ENCODE measurements at regions of chr19 and their contacts with region 1.

Region 1: GRCh38 chr19:1074544-1075283 is 7.7 kb downstream of the ARHGAP45 start:
- DNase-seq: peak; percentile 88 to 99 (median 95)
- ATAC-seq: peak; percentile 48 to 60 (median 55)
- H3K4me3 ChIP-seq: peak overlapping the region; percentile 37 to 49
- H3K4me3 Mint-ChIP-seq: peak overlapping the region; percentile 73 to 88 (median 77)
- H3K27ac ChIP-seq: peak overlapping the region; percentile 93
- H3K27ac Mint-ChIP-seq: peak overlapping the region; percentile 96 to 99
- H3K4me1 ChIP-seq: peaks cover 56 to 94% of the 10 kb centered on the region in 2 experiments
- H3K4me1 Mint-ChIP-seq: peaks cover 46 to 60% (median 53%) of the 10 kb centered on the region in 3 donors
- H3K27me3 ChIP-seq: no peaks in the 10 kb centered on the region
- H3K27me3 Mint-ChIP-seq: no peaks in the 10 kb centered on the region

Region 2: GRCh38 chr19:1020868-1021425 is 53.8 kb before region 1 on chr19 and contains the start of gene TMEM259:
- CTCF ChIA-PET with region 1: interaction called in 1 of 2 experiments, 5 read pairs
- POLR2A ChIA-PET with region 1: interaction called in 1 of 2 experiments, 24 read pairs
- DNase-seq: peak; percentile 94 to 98 (median 97)
- ATAC-seq: peak; percentile 81 to 94 (median 92)
- H3K4me3 ChIP-seq: peak within 1 kb of the TSS; percentile 80 to 93
- H3K4me3 Mint-ChIP-seq: peak within 1 kb of the TSS; percentile 89 to 90 (median 89)
- H3K27ac ChIP-seq: peak within 1 kb of the TSS; percentile 99
- H3K27ac Mint-ChIP-seq: peak within 1 kb of the TSS; percentile 97 to 99
- H3K4me1 ChIP-seq: peaks cover 10 to 71% of the 10 kb centered on the region in 2 experiments
- H3K4me1 Mint-ChIP-seq: peaks cover 34 to 51% (median 43%) of the 10 kb centered on the region in 3 donors
- H3K27me3 ChIP-seq: no peaks in the 10 kb centered on the region
- H3K27me3 Mint-ChIP-seq: peaks cover 0 to 2% of the 10 kb centered on the region in 2 donors
- total RNA-seq, gene TMEM259: 319 to 423 (median 372) TPM

Region 3: GRCh38 chr19:1189419-1189818 is 114.7 kb after region 1 on chr19:
- CTCF ChIA-PET with region 1: interaction called, 5 to 13 read pairs
- POLR2A ChIA-PET with region 1: no interaction called
- DNase-seq: peak in 8 of 35 experiments; percentile 20 to 60 (median 46)
- ATAC-seq: peak; percentile 34 to 82 (median 64)
- H3K4me3 ChIP-seq: no peak overlapping the region
- H3K4me3 Mint-ChIP-seq: peak overlapping the region in 1 of 3 donors; percentile 25
- H3K27ac ChIP-seq: peak overlapping the region; percentile 34
- H3K27ac Mint-ChIP-seq: peak overlapping the region; percentile 90 to 92
- H3K4me1 ChIP-seq: peaks cover 11 to 44% of the 10 kb centered on the region in 2 experiments
- H3K4me1 Mint-ChIP-seq: peaks cover 19 to 25% (median 25%) of the 10 kb centered on the region in 3 donors
- H3K27me3 ChIP-seq: no peaks in the 10 kb centered on the region
- H3K27me3 Mint-ChIP-seq: no peaks in the 10 kb centered on the region

Region 4: DNA sequence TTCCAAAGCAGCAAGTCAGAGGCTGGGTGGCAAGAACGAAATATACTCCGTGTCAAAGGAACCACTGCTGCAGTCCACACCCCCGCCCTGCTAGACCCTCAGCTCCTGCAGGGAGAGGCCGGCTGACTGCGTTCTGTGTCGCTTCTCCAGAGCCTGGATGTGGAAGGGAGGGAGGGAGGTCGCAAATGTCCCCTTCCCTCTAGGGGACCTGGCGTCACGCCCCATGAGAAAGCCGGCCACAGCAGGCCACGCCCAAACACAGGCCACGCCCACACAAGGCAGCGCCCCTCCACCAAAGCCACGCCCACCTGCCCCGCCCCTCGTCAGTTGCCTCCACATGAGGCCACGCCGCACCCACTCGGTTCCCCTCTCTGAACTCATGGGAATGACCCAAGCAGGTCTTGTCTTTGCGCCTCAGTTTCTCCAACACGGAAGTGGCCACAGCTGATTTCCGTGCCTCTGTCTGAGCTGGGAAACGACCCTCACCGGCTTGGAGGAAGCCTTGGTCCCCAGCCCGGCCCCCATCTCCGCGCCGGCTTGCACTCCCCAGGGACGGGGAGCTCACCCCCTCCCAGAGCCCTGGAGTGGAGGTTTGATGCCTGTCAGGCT is 616.1 kb after region 1 on chr19:
- CTCF ChIA-PET with region 1: no interaction called
- POLR2A ChIA-PET with region 1: no interaction called
- DNase-seq: peak in 29 of 35 experiments; percentile 19 to 67 (median 45)
- ATAC-seq: peak in 3 of 4 experiments; percentile 12 to 70 (median 37)
- H3K4me3 ChIP-seq: no peak overlapping the region
- H3K4me3 Mint-ChIP-seq: no peak overlapping the region
- H3K27ac ChIP-seq: no peak overlapping the region
- H3K27ac Mint-ChIP-seq: no peak overlapping the region
- H3K4me1 ChIP-seq: peaks cover 0 to 12% of the 10 kb centered on the region in 2 experiments
- H3K4me1 Mint-ChIP-seq: no peaks in the 10 kb centered on the region
- H3K27me3 ChIP-seq: peaks cover 8 to 67% of the 10 kb centered on the region in 2 experiments
- H3K27me3 Mint-ChIP-seq: peaks cover 14 to 52% of the 10 kb centered on the region in 2 donors

Region 5: DNA sequence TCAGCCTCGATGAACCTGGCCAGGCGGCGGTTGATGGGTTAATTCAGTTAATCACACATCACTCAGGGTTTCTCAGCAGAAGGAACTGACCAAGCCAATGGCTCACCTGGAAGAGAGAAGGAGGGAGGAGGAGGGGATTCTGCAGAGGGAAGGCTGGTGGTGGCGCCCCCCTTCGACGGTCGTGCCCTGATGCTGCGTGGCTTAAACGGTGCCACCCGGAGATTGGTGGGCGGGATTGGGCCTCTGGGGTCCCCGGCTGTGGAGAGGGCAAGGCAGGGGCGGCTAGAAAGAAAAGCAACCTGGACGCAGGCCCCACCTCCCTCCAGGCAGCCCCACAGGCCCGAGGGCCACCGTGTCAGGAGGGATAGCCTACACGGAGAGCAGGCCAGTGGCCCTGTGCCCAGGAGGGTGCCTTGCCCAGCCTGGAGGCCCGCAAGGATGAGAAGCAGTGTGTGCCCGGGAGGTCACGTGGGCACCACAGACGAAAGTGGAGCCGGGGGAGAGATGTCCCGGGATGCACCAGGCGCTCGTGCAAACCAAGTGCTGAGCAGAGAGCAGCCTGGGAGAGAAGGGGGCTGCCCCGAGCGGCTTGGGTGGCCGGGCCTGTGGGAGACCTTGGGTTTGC is 882.3 kb after region 1 on chr19:
- CTCF ChIA-PET with region 1: no interaction called
- POLR2A ChIA-PET with region 1: no interaction called
- DNase-seq: no peak
- ATAC-seq: no peak
- H3K4me3 ChIP-seq: no peak overlapping the region
- H3K4me3 Mint-ChIP-seq: no peak overlapping the region
- H3K27ac ChIP-seq: no peak overlapping the region
- H3K27ac Mint-ChIP-seq: no peak overlapping the region
- H3K4me1 ChIP-seq: peaks cover 0 to 55% of the 10 kb centered on the region in 2 experiments
- H3K4me1 Mint-ChIP-seq: peaks cover 13 to 27% (median 23%) of the 10 kb centered on the region in 3 donors
- H3K27me3 ChIP-seq: no peaks in the 10 kb centered on the region
- H3K27me3 Mint-ChIP-seq: no peaks in the 10 kb centered on the region

Measured in T-cell (primary cell).